Activated T-helper 1 cell treated with anti-CD3 and anti-CD28 coated beads, Interleukin-12 subunit alpha, Interleukin-12 subunit beta, Interleukin-2, Interleukin-4 antibody, amounts not matched to agents 30 ng/mL and 10 ng/mL and 1 ng/mL, durations not matched to agents 14 hours and 24 hours and 36 hours (primary cell): ENCODE measurements at regions of chr2 and their contacts with region 1.

Region 1: GRCh38 chr2:223970343-223971128 is 13.3 kb downstream of the MRPL44 start:
- DNase-seq: peak; percentile 41
- H3K4me3 Mint-ChIP-seq: no peak overlapping the region
- H3K27ac Mint-ChIP-seq: no peak overlapping the region
- H3K4me1 Mint-ChIP-seq: peaks cover 8% of the 10 kb centered on the region
- H3K27me3 Mint-ChIP-seq: no peaks in the 10 kb centered on the region

Region 2: DNA sequence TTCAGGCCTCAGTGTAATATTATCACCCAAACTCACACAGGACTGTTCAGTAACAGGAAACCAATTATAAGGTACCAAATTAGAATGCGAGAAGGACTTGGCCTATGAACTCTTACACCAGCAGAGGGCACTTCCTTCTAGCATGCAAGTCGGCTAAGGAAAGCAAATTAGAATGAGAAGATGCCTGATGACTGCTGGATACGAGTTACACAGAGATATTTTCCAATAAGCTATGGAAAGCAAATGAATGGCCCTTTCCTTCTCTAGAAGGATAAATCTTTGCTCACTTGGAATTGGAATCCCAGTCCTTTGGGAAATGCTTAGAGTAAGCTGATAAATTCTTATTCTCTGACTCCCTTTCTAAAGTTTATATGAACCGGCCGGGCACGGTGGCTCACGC is 243.0 kb before region 1 on chr2:
- intact Hi-C with region 1: loop called (anchors 1 kb)
- DNase-seq: peak; percentile 1
- H3K4me3 Mint-ChIP-seq: no peak overlapping the region
- H3K27ac Mint-ChIP-seq: no peak overlapping the region
- H3K4me1 Mint-ChIP-seq: no peaks in the 10 kb centered on the region
- H3K27me3 Mint-ChIP-seq: no peaks in the 10 kb centered on the region

Region 3: DNA sequence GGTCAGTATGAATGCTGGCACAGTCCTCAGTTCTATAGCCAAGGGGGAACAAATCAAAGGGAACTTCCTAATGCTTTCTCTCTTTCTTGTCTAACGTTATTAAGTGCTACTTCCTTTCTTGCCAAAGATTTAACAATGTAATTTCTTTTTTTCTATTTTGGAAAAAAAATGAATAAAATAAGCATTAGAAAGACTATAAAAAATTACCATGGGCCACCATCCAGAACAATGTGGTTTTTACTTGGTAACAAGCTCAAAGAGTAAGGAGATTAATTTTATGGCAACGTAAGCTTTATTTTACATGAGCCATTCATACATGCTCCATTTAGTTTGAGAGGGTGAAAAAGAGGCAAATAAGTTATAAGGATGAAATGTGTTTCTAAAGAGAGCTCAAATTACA is 28.4 kb after region 1 on chr2:
- intact Hi-C with region 1: no loop called
- DNase-seq: no peak
- H3K4me3 Mint-ChIP-seq: no peak overlapping the region
- H3K27ac Mint-ChIP-seq: no peak overlapping the region
- H3K4me1 Mint-ChIP-seq: peaks cover 16% of the 10 kb centered on the region
- H3K27me3 Mint-ChIP-seq: no peaks in the 10 kb centered on the region

Region 4: GRCh38 chr2:224039124-224039940 is 68.8 kb after region 1 on chr2 and contains the start of gene SERPINE2:
- intact Hi-C with region 1: loop called (anchors 1 kb)
- DNase-seq: peak; percentile 46
- H3K4me3 Mint-ChIP-seq: peak within 1 kb of the TSS; percentile 97
- H3K27ac Mint-ChIP-seq: peak within 1 kb of the TSS; percentile 82
- H3K4me1 Mint-ChIP-seq: peaks cover 25% of the 10 kb centered on the region
- H3K27me3 Mint-ChIP-seq: peaks cover 38% of the 10 kb centered on the region
- total RNA-seq, gene SERPINE2: 28.8 and 29.7 TPM in 2 replicates

Region 5: GRCh38 chr2:224284134-224284946 is 313.8 kb after region 1 on chr2:
- intact Hi-C with region 1: loop called (anchors 1 kb)
- DNase-seq: no peak
- H3K4me3 Mint-ChIP-seq: no peak overlapping the region
- H3K27ac Mint-ChIP-seq: no peak overlapping the region
- H3K4me1 Mint-ChIP-seq: no peaks in the 10 kb centered on the region
- H3K27me3 Mint-ChIP-seq: peaks cover 21% of the 10 kb centered on the region

Region 6: GRCh38 chr2:224369028-224369632 is 398.6 kb after region 1 on chr2:
- intact Hi-C with region 1: loop called (anchors 2 kb)
- DNase-seq: no peak
- H3K4me3 Mint-ChIP-seq: no peak overlapping the region
- H3K27ac Mint-ChIP-seq: no peak overlapping the region
- H3K4me1 Mint-ChIP-seq: no peaks in the 10 kb centered on the region
- H3K27me3 Mint-ChIP-seq: peaks cover 8% of the 10 kb centered on the region

Region 7: GRCh38 chr2:224449212-224450147 is 478.9 kb after region 1 on chr2:
- intact Hi-C with region 1: loop called (anchors 5 kb)
- DNase-seq: no peak
- H3K4me3 Mint-ChIP-seq: no peak overlapping the region
- H3K27ac Mint-ChIP-seq: no peak overlapping the region
- H3K4me1 Mint-ChIP-seq: no peaks in the 10 kb centered on the region
- H3K27me3 Mint-ChIP-seq: peaks cover 18% of the 10 kb centered on the region

Region 8: DNA sequence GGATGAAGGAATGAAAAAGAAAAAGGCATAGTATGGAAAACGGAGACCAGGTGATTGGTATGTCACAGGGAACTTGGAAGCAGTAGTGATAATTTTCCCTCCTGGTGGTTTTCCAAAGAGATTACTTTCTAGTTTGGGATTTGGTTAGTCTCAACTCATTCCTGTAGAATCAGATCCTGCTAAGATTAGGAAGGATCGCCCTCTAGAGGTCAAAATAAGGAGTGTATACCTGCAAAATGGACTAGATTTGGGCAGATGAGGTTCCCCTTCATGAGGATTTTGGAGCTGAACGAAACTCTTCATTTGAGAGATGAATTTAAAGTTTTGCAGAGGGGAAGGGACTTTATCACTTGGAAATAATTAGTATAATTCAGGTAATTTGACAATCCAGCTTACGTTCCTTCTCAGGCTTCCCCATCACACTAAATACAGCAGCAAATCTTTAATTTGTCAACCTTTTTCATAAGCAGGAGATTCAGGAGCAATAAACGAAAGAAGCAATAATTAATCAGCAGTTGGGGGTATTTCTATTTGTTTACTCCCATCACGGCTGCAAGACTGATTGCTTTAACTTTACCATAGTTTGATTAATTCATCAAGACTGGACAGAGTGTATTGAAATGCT is 680.4 kb after region 1 on chr2:
- intact Hi-C with region 1: loop called (anchors 5 kb)
- DNase-seq: no peak
- H3K4me3 Mint-ChIP-seq: no peak overlapping the region
- H3K27ac Mint-ChIP-seq: no peak overlapping the region
- H3K4me1 Mint-ChIP-seq: no peaks in the 10 kb centered on the region
- H3K27me3 Mint-ChIP-seq: no peaks in the 10 kb centered on the region